ENCODE measurements at regions of chr1 and their contacts with region 1.

Region 1: DNA sequence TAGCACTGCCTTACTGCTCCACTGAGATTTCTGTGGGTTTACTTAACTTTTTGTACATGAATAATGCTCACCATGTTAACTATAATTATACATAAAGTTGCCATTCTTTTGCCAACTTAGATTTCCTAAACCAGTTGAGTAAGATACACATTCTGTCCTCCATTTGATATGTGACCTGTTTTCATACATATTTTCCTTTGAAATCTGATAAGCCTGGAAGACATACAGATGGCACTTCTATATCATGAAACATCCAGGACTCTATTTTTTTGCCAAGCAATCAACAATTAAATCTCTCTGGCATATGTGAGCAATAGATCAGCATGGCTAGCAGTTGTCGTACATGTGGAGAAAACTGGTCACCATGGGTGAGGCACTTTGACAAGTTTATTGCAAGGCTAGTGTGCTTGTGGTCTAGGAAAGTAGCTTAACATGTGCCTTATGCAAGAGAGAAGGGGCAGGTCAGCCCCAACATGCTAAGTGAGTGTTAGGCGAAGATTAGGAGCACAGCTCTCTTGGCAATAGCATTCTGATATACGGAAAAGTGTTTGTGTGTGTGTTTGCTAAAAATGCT is 14.2 kb downstream of the PRRX1 start:
- DNase-seq: no peak
- H3K4me3 ChIP-seq: no peak overlapping the region
- H3K27ac ChIP-seq: no peak overlapping the region
- H3K4me1 ChIP-seq: no peaks in the 10 kb centered on the region
- H3K27me3 ChIP-seq: no peaks in the 10 kb centered on the region
- CTCF ChIP-seq: no peak
- POLR2A ChIP-seq: no peak

Region 2: DNA sequence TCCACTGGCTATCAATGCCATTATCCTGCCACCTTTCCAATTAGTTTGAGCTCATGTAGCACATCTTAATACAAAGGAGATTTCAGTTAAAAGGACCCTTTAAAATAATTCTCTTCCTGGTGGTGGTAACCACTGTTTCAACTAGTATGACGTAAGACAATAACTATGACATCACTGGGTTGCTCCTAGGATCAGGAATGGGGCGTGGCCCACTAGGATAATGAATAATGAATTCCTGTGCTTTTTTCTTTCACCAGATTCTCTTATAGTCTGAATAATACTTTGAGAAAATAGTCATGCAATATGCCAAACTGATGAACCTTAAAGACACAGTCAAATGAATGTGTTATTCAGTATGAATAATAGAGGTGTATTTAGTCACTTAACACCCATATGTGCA is 593.0 kb before region 1 on chr1:
- intact Hi-C with region 1: no loop called
- DNase-seq: no peak
- H3K4me3 ChIP-seq: no peak overlapping the region
- H3K27ac ChIP-seq: no peak overlapping the region
- H3K4me1 ChIP-seq: no peaks in the 10 kb centered on the region
- H3K27me3 ChIP-seq: no peaks in the 10 kb centered on the region
- CTCF ChIP-seq: no peak
- POLR2A ChIP-seq: no peak

Region 3: GRCh38 chr1:170461762-170462384 is 216.2 kb before region 1 on chr1:
- intact Hi-C with region 1: no loop called
- DNase-seq: no peak
- H3K4me3 ChIP-seq: no peak overlapping the region
- H3K27ac ChIP-seq: no peak overlapping the region
- H3K4me1 ChIP-seq: no peaks in the 10 kb centered on the region
- H3K27me3 ChIP-seq: no peaks in the 10 kb centered on the region
- CTCF ChIP-seq: no peak
- POLR2A ChIP-seq: no peak

Region 4: GRCh38 chr1:170604065-170604464 is 74.0 kb before region 1 on chr1:
- intact Hi-C with region 1: no loop called
- DNase-seq: no peak
- H3K4me3 ChIP-seq: no peak overlapping the region
- H3K27ac ChIP-seq: no peak overlapping the region
- H3K4me1 ChIP-seq: no peaks in the 10 kb centered on the region
- H3K27me3 ChIP-seq: no peaks in the 10 kb centered on the region
- CTCF ChIP-seq: no peak
- POLR2A ChIP-seq: no peak

Region 5: GRCh38 chr1:170823120-170823519 is 145.0 kb after region 1 on chr1:
- intact Hi-C with region 1: no loop called
- DNase-seq: no peak
- H3K4me3 ChIP-seq: no peak overlapping the region
- H3K27ac ChIP-seq: no peak overlapping the region
- H3K4me1 ChIP-seq: no peaks in the 10 kb centered on the region
- H3K27me3 ChIP-seq: no peaks in the 10 kb centered on the region
- CTCF ChIP-seq: no peak
- POLR2A ChIP-seq: no peak

Region 6: GRCh38 chr1:170929835-170930554 is 251.9 kb after region 1 on chr1:
- intact Hi-C with region 1: loop called (anchors 5 kb)
- DNase-seq: peak; percentile 21
- H3K4me3 ChIP-seq: no peak overlapping the region
- H3K27ac ChIP-seq: peak overlapping the region; percentile 38 to 40
- H3K4me1 ChIP-seq: no peaks in the 10 kb centered on the region
- H3K27me3 ChIP-seq: no peaks in the 10 kb centered on the region
- CTCF ChIP-seq: peak in 3 of 4 experiments; percentile 49 to 65 (median 59)
- POLR2A ChIP-seq: no peak

Measured in prostate gland (tissue), 2 donors.